Common myeloid progenitor, CD34-positive (primary cell): ENCODE measurements at regions of chr4 and their contacts with region 1.

Region 1: DNA sequence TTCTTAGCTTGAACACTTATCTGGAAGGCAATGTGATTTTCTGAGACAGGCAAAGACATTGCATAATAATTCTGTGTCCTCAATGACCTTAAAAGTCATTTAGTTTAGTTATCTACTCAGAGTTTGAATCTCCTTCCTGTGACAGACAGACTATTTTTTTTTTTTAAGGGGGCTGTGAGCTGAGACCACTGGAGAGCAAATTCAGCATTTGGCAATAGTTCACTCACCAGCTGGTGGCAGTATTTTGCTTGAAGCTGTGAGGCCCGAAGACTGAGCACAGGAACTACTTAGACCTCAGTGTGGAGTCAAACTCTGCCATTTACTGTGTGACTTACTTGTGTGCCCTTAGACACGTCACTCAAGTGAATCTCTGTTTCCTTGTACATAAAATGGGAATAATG is 22.9 kb upstream of the CPE start:
- DNase-seq: peak; percentile 57 to 71 (median 69)
- H3K4me3 ChIP-seq: no peak overlapping the region
- H3K27ac ChIP-seq: no peak overlapping the region
- H3K4me1 ChIP-seq: peaks cover 0 to 6% (median 0%) of the 10 kb centered on the region in 4 experiments
- H3K27me3 ChIP-seq: peaks cover 0 to 2% (median 0%) of the 10 kb centered on the region in 5 experiments

Region 2: GRCh38 chr4:165343353-165344191 is 12.3 kb before region 1 on chr4:
- CTCF ChIA-PET with region 1: interaction called, 12 read pairs
- POLR2A ChIA-PET with region 1: no interaction called
- DNase-seq: peak; percentile 25 to 53 (median 46)
- H3K4me3 ChIP-seq: no peak overlapping the region
- H3K27ac ChIP-seq: no peak overlapping the region
- H3K4me1 ChIP-seq: no peaks in the 10 kb centered on the region
- H3K27me3 ChIP-seq: no peaks in the 10 kb centered on the region

Region 3: GRCh38 chr4:165403637-165404036 is 47.7 kb after region 1 on chr4:
- CTCF ChIA-PET with region 1: no interaction called
- POLR2A ChIA-PET with region 1: no interaction called
- DNase-seq: no peak
- H3K4me3 ChIP-seq: no peak overlapping the region
- H3K27ac ChIP-seq: no peak overlapping the region
- H3K4me1 ChIP-seq: no peaks in the 10 kb centered on the region
- H3K27me3 ChIP-seq: no peaks in the 10 kb centered on the region